Astrocyte of the cerebellum (primary cell): ENCODE measurements at regions of chr22 and their contacts with region 1.

Region 1: DNA sequence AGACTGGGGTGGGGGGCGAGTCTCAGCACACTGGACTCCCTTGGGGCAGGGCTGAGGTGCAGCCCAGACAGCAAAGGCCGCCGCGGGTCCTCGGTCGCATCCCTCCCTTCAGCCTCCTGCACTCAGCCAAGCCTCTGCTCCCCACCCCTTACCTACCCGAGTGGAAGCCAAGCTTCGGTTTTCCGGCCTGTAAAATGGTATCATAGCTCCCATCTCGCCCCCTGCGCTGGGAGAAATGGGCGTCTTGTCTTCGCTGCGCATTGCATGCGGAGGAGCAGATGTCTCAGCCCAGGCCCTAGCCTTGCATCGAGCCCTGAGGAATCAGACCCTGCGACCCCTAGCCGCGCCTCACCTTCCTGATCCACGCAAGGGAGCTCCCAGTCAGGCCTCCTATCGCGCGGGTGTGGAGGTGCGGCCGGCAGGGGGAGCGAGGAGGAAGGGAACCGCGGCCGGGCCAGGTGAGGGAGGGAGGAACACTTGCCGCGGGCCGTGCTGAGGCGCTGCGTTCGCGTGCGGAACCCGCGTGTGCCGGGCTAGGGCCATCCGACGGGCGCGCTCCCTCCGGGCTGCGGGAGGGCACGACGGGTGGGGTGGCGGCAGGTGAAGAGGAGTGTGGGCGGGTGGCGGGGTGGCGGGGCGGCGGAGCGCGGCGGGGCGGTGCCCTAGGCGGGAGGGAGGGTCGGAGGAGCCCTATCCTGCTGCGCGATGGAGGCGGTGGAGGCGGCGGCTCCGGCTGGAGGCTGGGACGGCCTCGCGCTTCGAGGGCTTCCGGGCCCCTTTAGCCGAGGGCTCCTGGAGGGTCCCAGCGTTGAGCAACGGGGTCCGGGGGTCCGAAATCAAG is 4.1 kb upstream of the TBX1 start:
- DNase-seq: no peak
- H3K4me3 ChIP-seq: no peak overlapping the region
- CTCF ChIP-seq: peak; percentile 56

Region 2: DNA sequence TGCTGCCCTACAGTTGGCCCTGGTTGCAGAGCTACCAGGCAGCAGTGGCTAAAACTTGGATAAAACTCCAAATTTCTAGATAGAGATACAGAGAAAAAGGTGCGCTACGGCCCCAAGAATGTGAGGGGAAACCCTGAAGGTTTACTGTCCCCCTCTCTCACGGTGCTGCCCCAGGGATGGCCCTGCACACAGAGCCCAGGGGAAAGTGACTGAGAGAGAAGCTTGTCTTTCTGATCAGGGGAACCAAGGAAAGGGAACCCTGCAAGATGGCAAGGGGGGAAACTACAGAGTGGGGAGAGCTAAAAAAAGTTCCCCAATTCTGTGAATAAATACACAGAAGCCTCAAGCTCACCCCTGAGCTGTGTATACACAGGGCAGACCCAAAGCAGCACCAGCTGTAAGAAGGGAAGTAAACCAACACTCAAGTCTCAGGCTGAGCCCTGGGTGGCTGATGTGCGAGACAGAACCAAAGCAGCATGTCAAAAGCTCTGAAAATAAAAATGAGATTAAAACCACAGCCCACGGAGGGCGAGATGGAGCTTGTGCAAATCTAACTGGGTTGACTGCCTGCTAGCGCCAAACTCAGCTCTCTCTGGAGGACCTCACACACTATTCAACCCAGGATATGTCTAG is 76.1 kb after region 1 on chr22:
- in situ Hi-C with region 1: loop called (anchors 5 kb)
- DNase-seq: no peak
- H3K4me3 ChIP-seq: no peak overlapping the region
- CTCF ChIP-seq: no peak